Left ventricle myocardium inferior (tissue), 1 donor: ENCODE measurements at regions of chr12 and their contacts with region 1.

Region 1: DNA sequence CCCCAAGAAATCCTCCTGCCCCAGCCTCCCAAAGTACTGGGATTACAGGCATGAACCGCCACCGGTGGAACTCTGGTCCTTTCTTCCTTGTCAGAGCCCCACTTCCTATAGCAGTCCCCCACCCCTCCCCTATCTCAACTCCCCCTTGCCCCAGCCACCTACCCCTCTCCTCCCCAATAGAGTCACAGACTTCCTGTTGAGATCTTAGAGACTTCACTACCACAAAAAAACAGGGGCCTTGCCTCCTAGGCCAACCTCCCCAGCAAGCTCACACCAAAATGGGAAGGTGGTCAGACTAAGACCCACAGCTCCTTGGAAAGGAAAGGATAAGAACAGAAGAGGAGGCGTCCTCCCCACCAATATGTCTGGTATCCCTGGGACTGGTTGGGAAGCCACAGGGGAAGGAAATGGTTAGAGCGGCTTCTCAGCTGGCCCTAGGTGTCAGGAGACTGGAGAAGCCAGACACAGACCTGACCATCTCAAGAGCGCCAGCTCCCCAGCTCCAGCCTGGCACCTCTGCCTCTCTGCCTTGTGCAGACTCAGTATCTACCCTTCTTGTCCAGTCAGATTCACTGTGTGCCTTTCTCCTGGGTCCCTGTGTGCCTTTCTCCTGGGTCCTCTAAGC is 8.5 kb downstream of the ITGB7 start:
- DNase-seq: no peak
- H3K4me3 ChIP-seq: no peak overlapping the region
- H3K27ac ChIP-seq: no peak overlapping the region
- H3K4me1 ChIP-seq: peaks cover 16% of the 10 kb centered on the region
- H3K27me3 ChIP-seq: no peaks in the 10 kb centered on the region
- CTCF ChIP-seq: no peak

Region 2: GRCh38 chr12:53005986-53006809 is 192.4 kb before region 1 on chr12 and contains the start of gene EIF4B:
- intact Hi-C with region 1: no loop called
- DNase-seq: peak; percentile 100
- H3K4me3 ChIP-seq: peak within 1 kb of the TSS; percentile 97
- H3K27ac ChIP-seq: peak within 1 kb of the TSS; percentile 90
- H3K4me1 ChIP-seq: peaks cover 69% of the 10 kb centered on the region
- H3K27me3 ChIP-seq: no peaks in the 10 kb centered on the region
- CTCF ChIP-seq: no peak
- total RNA-seq, gene EIF4B: 390 TPM

Region 3: GRCh38 chr12:53065975-53066931 is 132.3 kb before region 1 on chr12:
- intact Hi-C with region 1: loop called (anchors 5 kb)
- DNase-seq: peak; percentile 81
- H3K4me3 ChIP-seq: peak overlapping the region; percentile 31
- H3K27ac ChIP-seq: peak overlapping the region; percentile 100
- H3K4me1 ChIP-seq: peaks cover 100% of the 10 kb centered on the region
- H3K27me3 ChIP-seq: no peaks in the 10 kb centered on the region
- CTCF ChIP-seq: peak; percentile 94

Region 4: DNA sequence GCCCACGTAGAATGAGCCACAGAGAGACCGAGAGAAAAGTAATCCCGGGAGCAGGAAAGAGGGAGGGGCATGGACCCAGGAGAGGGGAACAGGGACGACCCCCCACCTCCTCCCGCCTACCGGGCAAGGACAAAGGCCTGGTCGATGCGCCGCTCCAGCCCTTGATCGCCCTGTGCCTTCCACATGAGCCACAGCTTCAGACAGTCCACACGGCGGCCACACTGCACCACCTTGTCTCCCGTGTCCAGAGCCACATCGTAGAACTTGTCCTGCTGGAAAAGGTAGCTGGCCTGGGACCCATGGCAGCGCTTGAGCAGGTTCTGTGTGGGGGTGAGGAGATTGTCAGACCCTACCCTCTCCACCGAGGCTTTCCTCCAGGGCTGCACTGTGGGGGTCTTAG is 38.6 kb before region 1 on chr12:
- intact Hi-C with region 1: loop called (anchors 5 kb)
- DNase-seq: no peak
- H3K4me3 ChIP-seq: no peak overlapping the region
- H3K27ac ChIP-seq: no peak overlapping the region
- H3K4me1 ChIP-seq: peaks cover 6% of the 10 kb centered on the region
- H3K27me3 ChIP-seq: no peaks in the 10 kb centered on the region
- CTCF ChIP-seq: no peak

Region 5: GRCh38 chr12:53287741-53288216 is 89.2 kb after region 1 on chr12:
- intact Hi-C with region 1: no loop called
- DNase-seq: peak; percentile 67
- H3K4me3 ChIP-seq: no peak overlapping the region
- H3K27ac ChIP-seq: no peak overlapping the region
- H3K4me1 ChIP-seq: peaks cover 4% of the 10 kb centered on the region
- H3K27me3 ChIP-seq: no peaks in the 10 kb centered on the region
- CTCF ChIP-seq: peak; percentile 79